ENCODE measurements at regions of chr10 and their contacts with region 1.

Region 1: DNA sequence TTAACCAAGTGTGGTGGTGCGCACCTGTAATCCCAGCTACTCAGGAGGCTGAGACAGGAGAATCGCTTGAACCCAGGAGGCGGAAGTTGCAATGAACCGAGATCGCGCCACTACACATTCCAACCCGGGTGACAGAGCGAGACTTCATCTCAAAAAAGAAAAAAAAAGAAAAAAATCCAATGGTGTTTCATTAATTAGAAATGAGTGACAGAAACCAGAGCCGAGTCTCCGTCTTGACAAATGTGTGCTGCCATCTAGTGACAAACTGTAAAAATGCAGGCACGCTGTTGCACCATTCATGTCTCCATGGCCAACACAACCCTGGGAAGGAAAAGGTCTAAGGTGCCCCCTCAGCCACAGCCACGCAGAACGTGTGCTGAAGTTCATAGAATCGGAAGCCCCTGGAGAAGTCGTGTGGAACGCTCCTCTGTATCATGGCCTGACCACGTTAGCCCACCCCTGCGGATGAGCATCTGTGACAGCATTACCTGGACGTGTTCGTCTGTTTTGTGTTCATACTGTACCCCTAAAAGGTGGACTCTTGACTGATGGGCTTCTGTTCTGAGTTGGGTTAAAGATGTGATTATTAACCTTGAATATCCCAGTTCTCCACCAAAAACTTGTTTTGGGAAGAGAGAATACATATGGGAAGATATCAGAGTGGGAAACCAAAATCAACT is 94.9 kb downstream of the LYZL2 start:
- DNase-seq: no peak
- ATAC-seq: peak; percentile 56
- H3K4me3 ChIP-seq: no peak overlapping the region
- H3K27ac ChIP-seq: no peak overlapping the region
- H3K4me1 ChIP-seq: peaks cover 6% of the 10 kb centered on the region
- H3K27me3 ChIP-seq: no peaks in the 10 kb centered on the region
- CTCF ChIP-seq: peak; percentile 80 to 88 (median 84)
- EP300 ChIP-seq: no peak
- POLR2A ChIP-seq: no peak
- RAD21 ChIP-seq: peak; percentile 96

Region 2: DNA sequence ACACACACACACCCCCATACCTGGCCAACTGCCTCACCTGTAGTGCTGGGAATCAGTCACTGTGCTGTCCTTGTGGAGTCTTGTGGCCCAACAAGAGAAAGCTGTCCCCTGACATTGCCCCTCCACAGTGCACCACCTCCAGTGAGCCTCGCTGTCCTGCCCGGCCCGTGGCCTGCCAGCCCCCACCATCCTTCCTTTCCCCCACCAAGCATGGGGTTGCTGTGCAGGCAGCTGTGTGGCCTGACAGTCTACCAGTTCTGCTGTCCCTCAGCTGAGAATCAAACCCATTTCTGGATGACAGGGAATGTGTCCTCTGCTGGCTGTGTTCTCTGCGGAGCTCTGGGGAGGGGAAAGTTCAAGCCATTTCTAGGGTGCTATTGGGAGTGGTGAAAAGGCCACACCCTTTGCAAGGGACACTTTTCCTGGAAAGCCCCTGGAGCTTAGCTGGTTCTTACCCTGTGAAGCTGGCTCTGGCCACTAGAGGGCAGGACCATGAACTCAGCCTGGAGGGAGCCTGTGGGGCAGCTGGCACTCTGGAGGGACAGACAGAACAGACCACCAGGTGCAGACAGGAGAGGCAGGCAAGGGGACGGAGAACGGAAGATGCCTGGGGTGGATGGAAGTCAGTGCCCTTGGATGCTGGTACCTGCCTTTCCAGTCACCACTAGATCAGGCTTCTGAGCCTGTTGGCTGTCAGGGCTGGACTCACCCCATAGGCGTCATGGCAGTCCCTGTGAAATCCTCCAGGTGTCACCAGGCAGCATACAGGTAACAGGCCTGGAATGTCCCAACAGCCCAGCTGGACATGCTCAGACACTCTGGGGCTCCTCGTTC is 175.0 kb before region 1 on chr10:
- CTCF ChIA-PET with region 1: interaction called, 15 read pairs
- POLR2A ChIA-PET with region 1: no interaction called
- RAD21 ChIA-PET with region 1: interaction called, 8 read pairs
- SMC1A ChIA-PET with region 1: interaction called, 3 read pairs
- in situ Hi-C with region 1: no loop called
- intact Hi-C with region 1: no loop called
- DNase-seq: peak; percentile 39
- ATAC-seq: peak; percentile 97
- H3K4me3 ChIP-seq: no peak overlapping the region
- H3K27ac ChIP-seq: no peak overlapping the region
- H3K4me1 ChIP-seq: peaks cover 4% of the 10 kb centered on the region
- H3K27me3 ChIP-seq: no peaks in the 10 kb centered on the region
- CTCF ChIP-seq: peak; percentile 72 to 98 (median 95)
- EP300 ChIP-seq: no peak
- POLR2A ChIP-seq: no peak
- RAD21 ChIP-seq: peak; percentile 53

Region 3: GRCh38 chr10:30398788-30399187 is 135.8 kb before region 1 on chr10:
- CTCF ChIA-PET with region 1: interaction called, 29 read pairs
- POLR2A ChIA-PET with region 1: interaction called, 3 read pairs
- RAD21 ChIA-PET with region 1: interaction called, 11 read pairs
- SMC1A ChIA-PET with region 1: interaction called, 38 read pairs
- in situ Hi-C with region 1: no loop called
- intact Hi-C with region 1: loop called (anchors 1 kb)
- DNase-seq: no peak
- ATAC-seq: peak; percentile 65
- H3K4me3 ChIP-seq: no peak overlapping the region
- H3K27ac ChIP-seq: no peak overlapping the region
- H3K4me1 ChIP-seq: peaks cover 9% of the 10 kb centered on the region
- H3K27me3 ChIP-seq: no peaks in the 10 kb centered on the region
- CTCF ChIP-seq: no peak
- EP300 ChIP-seq: no peak
- POLR2A ChIP-seq: no peak
- RAD21 ChIP-seq: no peak

Region 4: GRCh38 chr10:30442019-30442606 is 92.5 kb before region 1 on chr10:
- CTCF ChIA-PET with region 1: interaction called, 123 read pairs
- POLR2A ChIA-PET with region 1: interaction called, 113 read pairs
- RAD21 ChIA-PET with region 1: interaction called, 48 read pairs
- SMC1A ChIA-PET with region 1: interaction called, 284 read pairs
- in situ Hi-C with region 1: no loop called
- intact Hi-C with region 1: no loop called
- DNase-seq: no peak
- ATAC-seq: peak; percentile 13
- H3K4me3 ChIP-seq: peak overlapping the region; percentile 13; the same call in 1 of the 2 replicates
- H3K27ac ChIP-seq: no peak overlapping the region
- H3K4me1 ChIP-seq: peaks cover 16% of the 10 kb centered on the region
- H3K27me3 ChIP-seq: no peaks in the 10 kb centered on the region
- CTCF ChIP-seq: no peak
- EP300 ChIP-seq: no peak
- POLR2A ChIP-seq: peak; percentile 61
- RAD21 ChIP-seq: no peak

Region 5: DNA sequence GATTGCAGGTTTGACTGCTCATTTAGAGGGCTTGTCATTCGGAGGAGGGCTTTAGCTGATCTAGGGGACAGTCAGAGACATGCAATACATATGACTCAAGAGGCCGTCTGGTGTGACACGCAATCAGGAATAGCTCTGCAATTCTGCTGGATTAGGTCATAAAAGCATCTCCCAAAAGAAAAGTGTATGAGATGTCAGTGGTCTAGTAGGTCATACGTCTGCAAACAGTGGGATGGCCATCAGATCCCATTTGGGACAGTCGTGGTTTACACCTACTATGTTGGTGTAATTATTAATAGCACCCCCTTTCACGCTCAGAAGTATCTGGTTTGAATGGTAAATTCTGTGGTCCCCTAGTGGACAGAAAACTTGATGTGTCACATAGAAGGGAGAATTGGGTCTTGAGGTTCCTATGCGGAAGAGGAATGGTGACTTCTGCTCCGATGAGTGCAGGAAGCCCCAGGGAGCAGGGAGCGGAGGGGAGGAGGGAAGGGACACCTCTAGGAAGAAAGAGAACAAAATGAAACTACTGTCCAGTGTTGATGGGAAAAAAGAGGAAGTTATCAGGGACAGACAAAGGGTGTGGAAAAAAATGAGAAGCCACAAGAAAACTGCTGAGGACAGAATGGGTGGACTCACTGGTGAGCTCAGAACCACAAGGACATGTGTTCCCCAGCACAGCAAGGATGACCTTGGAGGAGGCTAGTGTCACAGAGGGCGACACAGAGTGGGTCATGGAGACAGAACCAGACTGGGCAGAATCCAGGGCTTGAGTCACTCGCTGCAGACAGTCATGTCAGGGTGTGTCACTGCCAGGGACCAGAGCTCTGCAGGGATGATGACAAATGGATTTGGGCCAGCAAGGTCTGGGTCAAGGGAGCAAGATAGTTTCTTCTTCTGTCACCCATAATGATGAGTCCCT is 40.7 kb before region 1 on chr10:
- CTCF ChIA-PET with region 1: interaction called, 41 read pairs
- POLR2A ChIA-PET with region 1: interaction called, 7 read pairs
- RAD21 ChIA-PET with region 1: interaction called, 165 read pairs
- SMC1A ChIA-PET with region 1: interaction called, 147 read pairs
- in situ Hi-C with region 1: no loop called
- intact Hi-C with region 1: loop called (anchors 2 kb)
- DNase-seq: no peak
- ATAC-seq: peak; percentile 63
- H3K4me3 ChIP-seq: peak overlapping the region; percentile 40; the same call in 1 of the 2 replicates
- H3K27ac ChIP-seq: peak overlapping the region; percentile 87
- H3K4me1 ChIP-seq: peaks cover 88% of the 10 kb centered on the region
- H3K27me3 ChIP-seq: no peaks in the 10 kb centered on the region
- CTCF ChIP-seq: peak; percentile 20 to 45 (median 37); a peak in 5 of 6 replicates
- EP300 ChIP-seq: peak; percentile 35 to 80; a peak in 1 of 4 replicates
- POLR2A ChIP-seq: no peak
- RAD21 ChIP-seq: peak; percentile 37; the same call in 1 of the 2 replicates

Region 6: DNA sequence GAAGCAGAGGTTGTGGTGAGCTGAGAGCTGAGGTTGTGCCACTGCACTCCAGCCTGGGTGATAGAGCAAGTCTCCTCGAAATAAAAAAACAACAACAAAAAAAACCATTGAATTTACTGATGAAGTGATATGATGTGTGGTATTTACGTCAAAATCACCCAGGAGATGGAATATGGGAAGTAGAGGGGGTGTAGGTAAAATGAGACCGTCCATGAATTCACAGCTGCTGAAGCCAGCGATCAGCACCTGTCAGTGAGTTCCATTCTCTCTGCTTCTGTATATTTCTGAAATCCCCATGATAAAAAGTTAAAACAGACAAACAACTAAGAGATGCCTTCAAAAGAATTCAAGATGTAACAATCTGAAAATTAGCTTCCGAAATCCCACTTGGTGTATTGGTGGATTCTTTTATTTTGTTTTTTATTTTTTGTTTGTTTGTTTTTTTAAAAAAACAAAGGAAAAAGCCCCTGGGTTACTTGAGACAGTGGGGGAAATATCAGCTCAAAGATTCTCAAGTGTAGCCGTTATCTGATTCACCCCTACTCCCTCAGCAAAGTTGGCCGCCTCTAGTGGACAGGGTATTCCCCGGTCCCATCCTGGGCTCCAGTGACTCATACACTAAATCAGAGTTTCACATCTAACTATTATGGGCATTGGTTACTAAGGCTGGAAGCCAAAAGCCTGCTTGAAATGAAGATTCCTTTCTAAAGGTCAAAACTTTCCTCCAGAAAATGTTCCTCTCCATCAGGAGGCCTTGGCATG is 24.3 kb before region 1 on chr10:
- CTCF ChIA-PET with region 1: interaction called, 4 read pairs
- POLR2A ChIA-PET with region 1: interaction called, 8 read pairs
- RAD21 ChIA-PET with region 1: interaction called, 32 read pairs
- SMC1A ChIA-PET with region 1: interaction called, 92 read pairs
- in situ Hi-C with region 1: no loop called
- intact Hi-C with region 1: loop called (anchors 2 kb)
- DNase-seq: no peak
- ATAC-seq: peak; percentile 95
- H3K4me3 ChIP-seq: 0 out of 2 replicates have a peak overlapping the region, but pooled peaks have one; percentile 23
- H3K27ac ChIP-seq: peak overlapping the region; percentile 85
- H3K4me1 ChIP-seq: peaks cover 29% of the 10 kb centered on the region
- H3K27me3 ChIP-seq: no peaks in the 10 kb centered on the region
- CTCF ChIP-seq: peak in 2 of 3 experiments; percentile 7 to 23; a peak in 1 of 6 replicates
- EP300 ChIP-seq: no peak
- POLR2A ChIP-seq: no peak
- RAD21 ChIP-seq: no peak